Left cardiac atrium (tissue), 4 donors: ENCODE measurements at regions of chr19 and their contacts with region 1.

Region 1: GRCh38 chr19:33406521-33407139 is 33.1 kb downstream of the CEBPG start:
- DNase-seq: peak; percentile 65
- ATAC-seq: peak; percentile 14 to 72

Region 2: DNA sequence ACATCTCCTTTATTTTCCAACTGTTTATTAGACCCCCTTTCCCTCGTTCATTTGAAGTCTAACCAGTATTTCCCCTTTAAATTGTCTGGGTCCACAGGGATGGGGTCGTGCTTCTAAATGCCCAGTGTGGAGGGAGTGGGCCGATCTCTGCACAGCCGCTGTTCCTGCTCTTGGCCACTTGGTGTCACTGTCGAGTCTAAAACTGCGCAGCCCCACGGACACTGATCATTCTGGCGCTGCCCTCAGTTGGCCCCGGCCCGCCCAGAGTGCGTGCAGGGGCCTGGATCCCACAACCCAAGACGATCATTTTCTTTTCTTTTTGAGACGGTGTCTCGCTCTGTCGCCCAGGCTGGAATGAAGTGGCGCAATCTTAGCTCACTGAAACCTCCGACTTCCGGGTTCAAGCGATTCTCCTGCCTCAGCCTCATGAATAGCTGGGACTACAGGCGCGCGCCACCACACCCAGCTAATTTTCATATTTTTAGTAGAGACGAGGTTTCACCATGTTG is 262.7 kb before region 1 on chr19:
- intact Hi-C with region 1: loop called (anchors 10 kb)
- DNase-seq: peak; percentile 60
- ATAC-seq: peak; percentile 95 to 98

Region 3: GRCh38 chr19:33235269-33235995 is 171.2 kb before region 1 on chr19:
- intact Hi-C with region 1: loop called (anchors 2 to 5 kb)
- DNase-seq: peak; percentile 81
- ATAC-seq: peak; percentile 66 to 75

Region 4: GRCh38 chr19:33302175-33302973 is 104.3 kb before region 1 on chr19 and contains the start of gene CEBPA:
- intact Hi-C with region 1: loop called (anchors 10 kb)
- DNase-seq: peak; percentile 84
- ATAC-seq: peak; percentile 88 to 91
- total RNA-seq, gene CEBPA: 21.0 to 41.8 TPM

Region 5: GRCh38 chr19:33569821-33570220 is 163.2 kb after region 1 on chr19:
- intact Hi-C with region 1: no loop called
- DNase-seq: no peak
- ATAC-seq: no peak